ENCODE measurements at regions of chr1 and their contacts with region 1.

Region 1: DNA sequence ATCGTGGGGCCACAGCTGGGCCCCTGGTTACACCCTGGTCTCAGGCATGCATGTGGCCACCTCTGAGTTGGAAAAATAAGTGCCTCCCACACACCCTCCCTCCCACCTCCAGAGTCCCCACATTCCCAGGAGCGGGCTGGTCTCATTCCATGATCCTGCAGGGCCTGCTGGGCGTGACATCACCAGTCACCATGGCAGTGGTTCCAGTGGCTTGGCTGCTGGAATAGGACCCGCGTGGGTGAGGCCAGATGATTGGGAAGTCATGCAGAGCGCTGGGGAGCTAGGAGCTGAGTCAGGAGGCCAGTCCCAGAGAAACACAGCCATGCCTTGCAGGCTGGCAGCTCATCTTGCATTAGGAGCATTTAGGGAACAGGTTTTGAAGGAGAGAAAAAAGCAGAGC is 125.4 kb upstream of the TMEM51 start:
- DNase-seq: no peak
- H3K4me3 ChIP-seq: no peak overlapping the region
- H3K27ac ChIP-seq: no peak overlapping the region
- H3K4me1 ChIP-seq: peaks cover 0 to 11% (median 0%) of the 10 kb centered on the region in 4 donors
- H3K27me3 ChIP-seq: no peaks in the 10 kb centered on the region
- CTCF ChIP-seq: no peak
- EP300 ChIP-seq: no peak
- POLR2A ChIP-seq: no peak

Region 2: DNA sequence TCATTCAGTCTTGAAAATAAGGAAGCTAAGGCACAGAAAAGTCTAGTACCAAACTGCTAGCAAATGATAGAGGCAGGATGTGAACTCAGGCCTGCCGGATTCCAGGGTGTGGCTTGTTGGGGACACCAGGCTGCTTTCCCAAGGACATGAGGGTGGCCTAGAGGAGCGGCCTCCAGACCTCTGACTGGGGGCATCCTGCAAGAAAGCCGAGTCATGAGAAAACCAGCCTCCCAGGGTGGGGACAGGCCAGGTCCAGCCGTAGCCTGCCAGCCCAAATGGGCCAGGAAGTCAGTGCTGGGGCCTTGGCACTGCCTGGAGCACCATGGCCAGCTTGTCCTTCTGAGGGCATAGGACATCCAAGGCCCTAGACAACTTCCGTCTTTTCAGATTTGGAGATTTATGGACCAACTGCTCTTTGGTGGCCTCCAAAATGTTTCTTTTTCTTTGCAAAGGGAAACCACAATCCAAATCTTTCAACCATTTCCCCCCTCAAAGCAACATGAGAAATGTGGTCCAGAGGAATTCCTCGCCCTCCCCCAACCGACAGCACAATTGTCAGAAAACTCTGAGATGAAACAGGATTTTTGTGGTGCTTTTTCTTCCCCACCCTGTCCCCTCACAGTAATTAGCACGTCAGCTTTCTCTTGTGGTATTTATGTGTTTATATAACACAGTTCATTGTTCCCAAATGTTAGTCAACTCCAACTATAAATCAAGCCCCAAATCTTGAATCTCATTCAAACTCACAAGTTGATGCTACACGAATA is 217.3 kb before region 1 on chr1:
- in situ Hi-C with region 1: no loop called
- intact Hi-C with region 1: no loop called
- DNase-seq: no peak
- H3K4me3 ChIP-seq: no peak overlapping the region
- H3K27ac ChIP-seq: peak overlapping the region in 2 of 4 donors; percentile 2 to 46
- H3K4me1 ChIP-seq: no peaks in the 10 kb centered on the region
- H3K27me3 ChIP-seq: no peaks in the 10 kb centered on the region
- CTCF ChIP-seq: no peak
- EP300 ChIP-seq: no peak
- POLR2A ChIP-seq: no peak

Region 3: GRCh38 chr1:14915356-14916054 is 112.6 kb before region 1 on chr1:
- in situ Hi-C with region 1: loop called in 2 of 4 experiments (anchors 10 kb)
- intact Hi-C with region 1: loop called (anchors 10 kb)
- DNase-seq: peak; percentile 47
- H3K4me3 ChIP-seq: no peak overlapping the region
- H3K27ac ChIP-seq: no peak overlapping the region
- H3K4me1 ChIP-seq: no peaks in the 10 kb centered on the region
- H3K27me3 ChIP-seq: no peaks in the 10 kb centered on the region
- CTCF ChIP-seq: peak; percentile 66 to 91 (median 90)
- EP300 ChIP-seq: no peak
- POLR2A ChIP-seq: no peak

Region 4: DNA sequence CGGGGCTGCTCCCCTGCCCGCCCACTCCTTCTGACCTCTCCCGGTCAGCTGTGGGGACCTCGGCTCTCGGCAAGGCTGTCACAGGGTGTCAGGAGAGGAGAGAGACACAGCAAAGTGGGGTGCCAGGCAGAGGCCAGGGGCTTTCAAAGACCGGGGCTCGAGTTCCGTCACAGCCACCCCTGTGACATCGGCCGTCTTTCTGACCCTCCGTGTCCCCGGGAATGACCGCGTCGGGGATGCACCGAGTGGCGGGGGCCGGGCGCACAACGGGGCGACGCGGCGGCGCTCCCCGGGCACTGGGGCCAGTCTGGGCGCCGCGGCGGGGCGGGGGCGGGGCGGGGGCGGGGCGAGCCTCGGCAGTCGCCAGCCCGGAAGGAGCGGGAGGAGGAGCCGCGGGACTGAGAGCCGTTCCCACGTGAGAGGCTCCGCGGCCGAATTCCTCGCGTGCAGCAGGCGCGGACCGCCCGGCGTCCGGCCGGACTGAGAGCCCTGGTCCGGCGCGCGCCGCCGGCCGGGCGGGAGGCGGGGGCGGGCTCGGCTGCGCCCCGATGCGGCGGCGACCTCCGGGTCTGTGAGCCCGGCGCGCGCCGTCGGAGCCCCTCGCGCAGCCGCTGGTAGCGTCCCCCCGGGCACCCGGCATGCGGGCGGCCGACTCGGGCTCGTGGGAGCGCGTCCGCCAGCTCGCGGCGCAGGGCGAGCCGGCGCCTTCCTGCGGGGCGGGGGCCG is 104.2 kb before region 1 on chr1:
- in situ Hi-C with region 1: loop called in 2 of 4 experiments (anchors 10 kb)
- intact Hi-C with region 1: loop called (anchors 10 kb)
- DNase-seq: peak; percentile 67
- H3K4me3 ChIP-seq: peak overlapping the region in 3 of 4 donors; percentile 45 to 64 (median 61)
- H3K27ac ChIP-seq: peak overlapping the region in 3 of 4 donors; percentile 6 to 43 (median 12)
- H3K4me1 ChIP-seq: peaks cover 5 to 12% (median 9%) of the 10 kb centered on the region in 4 donors
- H3K27me3 ChIP-seq: peaks cover 26% of the 10 kb centered on the region
- CTCF ChIP-seq: no peak
- EP300 ChIP-seq: no peak
- POLR2A ChIP-seq: no peak

Region 5: DNA sequence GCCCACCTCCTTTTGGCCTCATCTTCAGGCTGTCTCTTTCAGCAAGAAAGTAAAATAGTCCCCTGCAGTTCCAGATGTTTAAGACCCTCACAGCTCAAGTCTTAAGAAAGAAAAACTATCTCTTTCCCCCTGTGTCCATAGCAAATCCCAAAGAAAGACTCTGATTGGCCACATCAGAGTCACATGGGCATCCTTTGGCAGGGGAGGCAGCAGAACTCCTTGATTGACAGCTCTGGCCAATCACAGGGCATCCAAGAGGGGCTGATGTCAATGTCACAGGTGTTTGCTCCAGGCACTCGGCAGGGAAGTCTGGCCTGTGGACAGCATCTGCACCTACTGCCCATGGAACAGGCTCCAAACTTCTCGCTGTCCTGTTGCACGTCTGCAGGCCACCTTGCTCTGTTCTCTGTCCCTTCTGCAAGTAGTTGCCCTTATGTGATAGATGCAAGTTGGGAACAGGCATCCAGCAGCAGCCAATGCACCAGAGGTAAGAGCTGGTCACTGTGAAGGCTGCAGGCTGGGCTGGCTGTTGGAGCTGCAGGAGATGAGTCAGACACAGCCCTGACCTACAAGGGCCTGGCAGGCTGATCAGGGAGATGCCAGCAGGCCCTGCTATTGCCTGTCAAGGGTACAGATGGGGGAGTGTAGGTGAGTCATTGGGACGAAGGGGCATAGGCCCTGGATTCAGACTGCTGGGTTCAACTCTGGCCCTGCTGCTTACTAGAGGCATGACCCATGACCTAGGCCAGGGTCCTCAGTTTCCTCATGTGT is 28.6 kb after region 1 on chr1:
- in situ Hi-C with region 1: no loop called
- intact Hi-C with region 1: no loop called
- DNase-seq: no peak
- H3K4me3 ChIP-seq: no peak overlapping the region
- H3K27ac ChIP-seq: no peak overlapping the region
- H3K4me1 ChIP-seq: no peaks in the 10 kb centered on the region
- H3K27me3 ChIP-seq: no peaks in the 10 kb centered on the region
- CTCF ChIP-seq: no peak
- EP300 ChIP-seq: no peak
- POLR2A ChIP-seq: no peak

Region 6: GRCh38 chr1:15106608-15107007 is 78.5 kb after region 1 on chr1:
- in situ Hi-C with region 1: no loop called
- intact Hi-C with region 1: no loop called
- DNase-seq: peak; percentile 37
- H3K4me3 ChIP-seq: no peak overlapping the region
- H3K27ac ChIP-seq: no peak overlapping the region
- H3K4me1 ChIP-seq: no peaks in the 10 kb centered on the region
- H3K27me3 ChIP-seq: no peaks in the 10 kb centered on the region
- CTCF ChIP-seq: no peak
- EP300 ChIP-seq: no peak
- POLR2A ChIP-seq: no peak

Measured in transverse colon (tissue), 4 donors.